ENCODE measurements at regions of chr10 and their contacts with region 1.

Region 1: DNA sequence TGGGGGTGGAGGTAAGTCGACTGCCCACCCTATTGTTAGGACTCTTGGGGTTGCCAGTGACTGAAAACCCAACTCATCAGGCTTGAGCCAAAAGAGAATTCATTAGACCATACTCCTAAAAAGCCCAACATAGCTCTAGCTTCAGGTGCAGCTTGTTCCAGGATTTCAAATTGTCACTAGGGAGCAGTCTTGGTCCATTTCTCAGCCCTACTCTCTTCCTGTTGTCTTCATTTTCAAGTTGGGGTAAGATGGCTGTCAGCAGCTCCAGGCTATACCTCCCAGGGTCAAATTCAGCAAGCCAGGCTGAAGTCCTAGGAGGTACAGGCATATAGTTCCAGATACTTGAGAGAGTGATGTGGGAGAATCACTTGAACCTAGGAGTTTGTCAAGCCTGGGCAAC is 14.9 kb upstream of the COL13A1 start:
- DNase-seq: no peak
- ATAC-seq: peak; percentile 85
- H3K4me3 Mint-ChIP-seq: no peak overlapping the region
- H3K27ac Mint-ChIP-seq: no peak overlapping the region
- H3K4me1 Mint-ChIP-seq: no peaks in the 10 kb centered on the region
- H3K27me3 Mint-ChIP-seq: peaks cover 17% of the 10 kb centered on the region
- CTCF ChIP-seq: no peak

Region 2: DNA sequence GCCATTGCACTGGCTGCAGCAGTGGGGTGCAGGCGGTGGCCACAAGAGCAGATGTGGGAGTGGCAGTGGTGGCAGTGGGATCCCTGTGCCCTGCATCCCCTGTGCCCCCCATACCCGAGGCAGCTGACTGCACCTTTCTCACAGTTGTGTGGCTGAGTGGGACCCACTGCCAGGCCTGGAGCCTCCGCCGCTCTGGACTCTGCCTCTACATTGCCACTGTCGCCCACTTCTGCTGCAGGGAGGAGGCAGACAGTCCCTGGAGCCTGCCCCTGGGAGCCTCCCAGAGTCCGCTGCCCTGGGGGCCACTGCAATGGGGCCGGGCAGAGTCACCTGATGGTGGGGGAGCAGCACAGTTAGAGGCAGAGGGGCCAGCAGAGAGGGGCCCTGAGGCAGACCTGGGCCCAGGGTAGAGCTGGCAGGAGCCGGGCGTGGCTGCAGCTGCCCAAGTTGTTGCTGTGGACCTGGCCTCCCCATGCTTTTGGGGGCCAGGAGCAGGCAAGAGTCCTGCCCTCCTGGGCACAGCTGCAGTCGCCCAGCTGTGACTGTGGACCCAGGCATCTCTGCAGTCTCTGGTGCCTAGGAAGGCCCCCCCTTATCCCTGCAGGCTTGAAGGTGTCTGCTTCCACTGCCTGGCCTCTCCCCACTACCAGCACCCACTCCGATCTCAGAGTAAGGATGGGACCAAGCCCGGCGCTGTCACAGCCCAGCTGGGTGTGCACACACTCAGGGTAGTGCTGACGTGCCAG is 134.5 kb before region 1 on chr10:
- CTCF ChIA-PET with region 1: no interaction called
- POLR2A ChIA-PET with region 1: no interaction called
- DNase-seq: no peak
- ATAC-seq: no peak
- H3K4me3 Mint-ChIP-seq: no peak overlapping the region
- H3K27ac Mint-ChIP-seq: no peak overlapping the region
- H3K4me1 Mint-ChIP-seq: peaks cover 46% of the 10 kb centered on the region
- H3K27me3 Mint-ChIP-seq: no peaks in the 10 kb centered on the region
- CTCF ChIP-seq: no peak

Region 3: GRCh38 chr10:69663369-69663947 is 123.3 kb before region 1 on chr10:
- CTCF ChIA-PET with region 1: interaction called, 11 read pairs
- POLR2A ChIA-PET with region 1: no interaction called
- DNase-seq: peak; percentile 63
- ATAC-seq: peak; percentile 88
- H3K4me3 Mint-ChIP-seq: no peak overlapping the region
- H3K27ac Mint-ChIP-seq: no peak overlapping the region
- H3K4me1 Mint-ChIP-seq: peaks cover 27% of the 10 kb centered on the region
- H3K27me3 Mint-ChIP-seq: peaks cover 9% of the 10 kb centered on the region
- CTCF ChIP-seq: no peak

Region 4: DNA sequence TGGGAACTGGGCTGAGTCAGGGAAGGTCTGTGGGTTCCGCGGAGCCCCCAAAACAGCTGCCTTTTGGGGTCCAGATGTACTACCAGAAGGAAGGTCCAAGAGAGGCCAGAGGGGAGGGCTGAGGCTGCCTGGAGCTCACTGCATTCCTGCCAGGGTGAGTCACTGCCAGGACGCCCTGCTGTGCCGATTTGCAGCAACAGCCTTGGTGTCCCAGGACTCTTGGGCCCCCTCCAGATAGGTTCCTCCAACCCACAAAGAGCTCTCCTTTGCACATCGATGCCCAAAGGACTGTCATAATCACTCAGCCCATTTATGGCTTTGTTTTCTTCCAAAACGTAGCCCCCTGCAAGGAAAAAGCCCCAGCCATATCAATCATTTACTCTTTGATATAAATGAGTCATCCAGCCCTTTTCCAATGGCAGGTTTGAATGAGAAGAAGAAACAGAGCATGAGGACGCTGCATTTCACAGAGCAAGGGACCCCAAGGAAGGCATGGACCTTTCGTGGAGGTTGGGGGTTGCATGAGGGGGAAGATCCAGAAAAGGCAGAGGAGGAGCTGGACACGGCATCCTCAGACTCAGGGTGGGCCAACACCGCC is 17.3 kb before region 1 on chr10:
- CTCF ChIA-PET with region 1: interaction called, 58 read pairs
- POLR2A ChIA-PET with region 1: no interaction called
- DNase-seq: peak; percentile 64
- ATAC-seq: peak; percentile 86
- H3K4me3 Mint-ChIP-seq: no peak overlapping the region
- H3K27ac Mint-ChIP-seq: no peak overlapping the region
- H3K4me1 Mint-ChIP-seq: peaks cover 12% of the 10 kb centered on the region
- H3K27me3 Mint-ChIP-seq: peaks cover 9% of the 10 kb centered on the region
- CTCF ChIP-seq: no peak

Region 5: DNA sequence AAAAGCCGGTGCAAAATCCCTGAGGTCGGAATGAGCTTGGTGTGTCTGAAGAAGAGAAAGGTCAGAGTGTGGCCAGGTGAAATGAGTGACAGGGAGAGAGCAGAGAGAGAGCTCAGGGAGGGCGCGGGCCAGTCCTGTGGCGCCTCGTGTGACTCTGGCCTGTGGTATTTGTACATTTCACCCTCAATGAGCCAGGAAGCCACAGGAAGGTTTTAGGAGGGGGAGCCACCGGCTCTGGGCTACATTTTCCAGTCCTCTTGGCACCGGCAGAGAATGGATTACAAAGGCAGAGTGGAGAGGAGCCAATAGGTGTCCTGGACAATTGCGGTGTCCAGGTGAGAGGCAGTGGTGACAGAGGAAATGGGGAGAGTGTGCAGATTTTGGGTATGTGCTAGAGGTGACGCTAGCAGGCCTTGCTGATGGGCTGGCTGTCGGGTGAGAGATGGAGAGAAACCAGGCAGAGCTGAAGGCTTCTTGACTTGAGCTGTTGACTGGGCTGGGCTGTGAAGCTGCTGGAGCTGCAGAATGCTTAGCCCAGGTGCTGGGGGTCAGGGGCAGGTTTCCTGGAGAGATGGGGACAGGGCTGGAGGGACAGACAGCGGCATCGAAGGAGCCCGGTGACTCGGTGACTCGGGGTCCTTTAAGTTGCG is 53.0 kb after region 1 on chr10:
- CTCF ChIA-PET with region 1: interaction called, 14 read pairs
- POLR2A ChIA-PET with region 1: no interaction called
- DNase-seq: no peak
- ATAC-seq: no peak
- H3K4me3 Mint-ChIP-seq: no peak overlapping the region
- H3K27ac Mint-ChIP-seq: no peak overlapping the region
- H3K4me1 Mint-ChIP-seq: peaks cover 43% of the 10 kb centered on the region
- H3K27me3 Mint-ChIP-seq: no peaks in the 10 kb centered on the region
- CTCF ChIP-seq: no peak

Region 6: GRCh38 chr10:69885379-69886013 is 98.7 kb after region 1 on chr10:
- CTCF ChIA-PET with region 1: interaction called, 15 read pairs
- POLR2A ChIA-PET with region 1: no interaction called
- DNase-seq: no peak
- ATAC-seq: peak; percentile 48
- H3K4me3 Mint-ChIP-seq: no peak overlapping the region
- H3K27ac Mint-ChIP-seq: no peak overlapping the region
- H3K4me1 Mint-ChIP-seq: peaks cover 16% of the 10 kb centered on the region
- H3K27me3 Mint-ChIP-seq: no peaks in the 10 kb centered on the region; the same call in none of the 2 replicates
- CTCF ChIP-seq: peak; percentile 42; the same call in 1 of the 2 replicates

Region 7: DNA sequence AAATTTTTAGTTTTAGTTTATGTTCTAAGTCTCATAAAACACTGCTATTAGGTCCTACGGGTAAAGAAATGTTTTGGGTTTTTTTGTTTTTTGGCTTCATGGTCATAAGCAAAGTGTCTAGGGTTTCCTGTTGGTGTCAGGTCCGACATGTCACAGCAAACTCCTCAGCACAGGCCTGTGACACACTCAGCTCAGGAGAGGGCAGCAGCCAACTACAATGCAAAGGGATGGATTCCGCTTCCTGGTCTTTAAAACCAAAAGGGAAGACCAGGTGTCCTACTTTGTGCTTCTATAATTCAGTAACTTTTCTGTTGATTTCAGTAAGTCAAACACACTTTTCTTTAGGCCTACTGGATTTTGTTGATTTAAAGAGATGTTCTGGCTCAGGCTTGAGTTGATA is 182.0 kb after region 1 on chr10:
- CTCF ChIA-PET with region 1: interaction called, 12 read pairs
- POLR2A ChIA-PET with region 1: no interaction called
- DNase-seq: peak; percentile 51
- ATAC-seq: peak; percentile 91
- H3K4me3 Mint-ChIP-seq: no peak overlapping the region
- H3K27ac Mint-ChIP-seq: no peak overlapping the region
- H3K4me1 Mint-ChIP-seq: peaks cover 6% of the 10 kb centered on the region
- H3K27me3 Mint-ChIP-seq: peaks cover 34% of the 10 kb centered on the region
- CTCF ChIP-seq: no peak

Region 8: DNA sequence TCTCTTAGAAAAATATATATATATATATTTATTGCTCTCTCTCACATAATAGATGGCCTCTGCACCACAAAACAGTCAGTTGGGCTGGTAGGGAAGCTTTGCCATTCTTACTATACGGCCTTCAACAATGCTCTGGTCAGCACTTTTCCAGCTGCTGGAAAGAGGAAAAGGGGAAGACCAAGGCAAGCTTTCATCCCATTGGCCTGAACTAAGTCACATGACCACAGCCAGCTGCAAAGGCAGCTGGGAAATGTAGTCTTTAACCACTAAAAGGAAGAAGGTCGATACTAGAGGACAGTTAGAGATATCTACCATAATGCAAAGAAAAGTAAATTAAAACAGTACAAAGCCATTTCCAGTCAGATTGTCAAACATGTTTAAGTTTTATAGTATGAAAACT is 207.5 kb after region 1 on chr10:
- CTCF ChIA-PET with region 1: no interaction called
- POLR2A ChIA-PET with region 1: no interaction called
- DNase-seq: no peak
- ATAC-seq: peak; percentile 65; the same call in 1 of the 2 replicates
- H3K4me3 Mint-ChIP-seq: no peak overlapping the region
- H3K27ac Mint-ChIP-seq: no peak overlapping the region
- H3K4me1 Mint-ChIP-seq: no peaks in the 10 kb centered on the region
- H3K27me3 Mint-ChIP-seq: peaks cover 15% of the 10 kb centered on the region
- CTCF ChIP-seq: no peak

Region 9: DNA sequence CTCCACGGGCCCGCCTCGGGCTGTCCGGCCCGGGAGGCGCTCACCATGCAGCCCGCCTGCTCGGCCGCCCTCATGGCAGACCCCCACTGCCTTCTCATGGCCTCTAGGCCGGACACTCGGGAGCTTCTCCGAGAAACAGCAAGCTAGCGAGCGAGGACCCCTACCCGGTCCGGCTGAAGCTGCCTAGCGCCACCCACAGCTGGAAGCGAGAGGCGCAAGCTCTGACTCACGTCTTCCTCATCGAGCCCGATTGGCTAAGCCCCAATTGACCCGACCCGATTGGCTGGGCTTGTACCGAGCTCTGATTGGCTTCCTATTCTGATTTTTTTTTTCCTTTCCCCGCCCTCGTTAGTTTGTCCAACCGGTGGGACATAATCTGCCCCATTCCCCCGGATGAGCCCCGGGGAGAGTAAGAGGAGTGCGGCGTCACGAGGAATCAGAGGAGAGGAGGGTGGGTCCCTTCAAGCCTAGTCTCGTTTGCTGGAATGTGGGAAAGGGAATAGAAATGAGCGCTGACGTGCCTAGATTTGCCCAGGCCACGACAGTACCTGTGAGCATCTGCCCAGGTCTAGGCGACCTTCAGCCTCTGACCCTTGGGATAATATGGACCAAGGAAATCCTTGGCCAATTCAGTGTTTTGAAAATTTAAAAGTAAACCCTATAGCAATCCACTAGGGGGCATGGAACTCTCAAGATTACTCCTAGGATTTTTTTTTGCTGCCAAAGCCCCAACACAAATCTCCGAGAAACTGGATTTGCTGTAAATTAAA is 359.9 kb after region 1 on chr10 and contains the start of gene TYSND1:
- CTCF ChIA-PET with region 1: interaction called, 13 read pairs
- POLR2A ChIA-PET with region 1: no interaction called
- DNase-seq: peak; percentile 98
- ATAC-seq: peak; percentile 93
- H3K4me3 Mint-ChIP-seq: peak within 1 kb of the TSS; percentile 78
- H3K27ac Mint-ChIP-seq: peak within 1 kb of the TSS; percentile 96
- H3K4me1 Mint-ChIP-seq: peaks cover 16% of the 10 kb centered on the region
- H3K27me3 Mint-ChIP-seq: no peaks in the 10 kb centered on the region
- CTCF ChIP-seq: peak; percentile 17; the same call in 1 of the 2 replicates
- total RNA-seq, gene TYSND1: 18.9 to 21.3 TPM (median 20.7 TPM) in 3 replicates